MCF 10A (cell line): ENCODE measurements at regions of chr20 and their contacts with region 1.

Region 1: GRCh38 chr20:9407805-9408421 is 106.5 kb upstream of the LAMP5 start:
- DNase-seq: peak; percentile 80
- H3K4me3 Mint-ChIP-seq: no peak overlapping the region
- H3K27ac Mint-ChIP-seq: no peak overlapping the region
- H3K4me1 Mint-ChIP-seq: no peaks in the 10 kb centered on the region
- H3K27me3 Mint-ChIP-seq: no peaks in the 10 kb centered on the region
- CTCF ChIP-seq: peak; percentile 84

Region 2: DNA sequence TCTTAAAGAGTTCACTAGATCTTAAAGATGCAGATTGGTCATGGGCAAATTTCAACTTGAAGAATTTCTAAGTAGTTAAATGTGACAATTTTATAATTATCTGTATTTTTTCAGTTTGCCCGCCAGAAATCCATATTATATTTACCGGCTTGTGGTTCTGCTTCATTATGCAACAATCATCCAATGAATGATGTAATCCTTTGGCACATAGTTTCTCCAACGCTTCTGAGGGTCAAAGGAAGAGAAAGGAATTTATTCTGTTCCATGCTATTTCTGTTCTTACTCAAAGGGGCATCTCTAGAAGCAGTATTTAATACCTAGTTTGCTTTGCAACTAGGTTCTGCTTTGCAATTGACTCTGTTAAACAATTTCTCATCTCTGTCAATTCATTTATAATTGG is 698.3 kb before region 1 on chr20:
- CTCF ChIA-PET with region 1: no interaction called
- POLR2A ChIA-PET with region 1: no interaction called
- intact Hi-C with region 1: no loop called
- DNase-seq: peak; percentile 17
- H3K4me3 Mint-ChIP-seq: no peak overlapping the region
- H3K27ac Mint-ChIP-seq: no peak overlapping the region
- H3K4me1 Mint-ChIP-seq: no peaks in the 10 kb centered on the region
- H3K27me3 Mint-ChIP-seq: no peaks in the 10 kb centered on the region
- CTCF ChIP-seq: no peak

Region 3: DNA sequence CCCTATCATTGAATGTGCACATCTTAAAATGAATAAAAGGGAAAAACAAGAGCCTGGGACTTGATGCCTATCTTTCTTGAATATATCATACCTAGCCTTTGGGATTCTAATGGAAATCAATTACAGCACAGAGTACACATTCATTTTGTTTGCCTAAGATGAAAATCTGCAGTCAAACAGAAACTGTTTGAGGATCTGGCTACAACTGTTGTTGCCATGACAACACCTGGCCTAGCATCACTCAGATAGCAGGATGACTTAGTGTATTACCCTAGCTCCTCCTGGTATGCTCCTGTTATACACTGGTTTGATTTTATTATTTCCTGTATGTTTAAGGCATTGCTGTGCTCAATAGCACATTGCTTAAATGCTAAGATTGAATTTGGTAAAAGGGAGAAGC is 34.9 kb after region 1 on chr20:
- CTCF ChIA-PET with region 1: interaction called, 51 read pairs
- POLR2A ChIA-PET with region 1: no interaction called
- intact Hi-C with region 1: no loop called
- DNase-seq: no peak
- H3K4me3 Mint-ChIP-seq: no peak overlapping the region
- H3K27ac Mint-ChIP-seq: no peak overlapping the region
- H3K4me1 Mint-ChIP-seq: no peaks in the 10 kb centered on the region
- H3K27me3 Mint-ChIP-seq: no peaks in the 10 kb centered on the region
- CTCF ChIP-seq: no peak

Region 4: DNA sequence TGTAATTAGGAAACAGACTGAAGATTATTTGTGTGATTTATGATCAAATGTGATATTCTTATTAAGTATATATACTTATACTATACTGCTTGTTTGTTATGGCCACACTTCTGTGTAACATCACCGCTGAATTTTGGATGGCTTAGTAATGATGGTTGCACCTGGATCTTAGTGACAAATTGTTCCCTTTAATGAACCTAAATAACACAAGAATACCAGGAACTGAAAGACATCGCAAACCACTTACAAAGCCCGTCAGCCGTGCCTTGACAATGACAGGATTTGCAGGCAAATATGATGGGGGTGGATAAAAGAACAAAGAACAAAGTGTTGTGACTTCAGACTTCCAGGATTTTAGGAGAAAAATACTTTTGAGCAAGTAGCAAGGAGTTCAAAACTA is 173.6 kb after region 1 on chr20:
- CTCF ChIA-PET with region 1: interaction called, 21 read pairs
- POLR2A ChIA-PET with region 1: no interaction called
- intact Hi-C with region 1: no loop called
- DNase-seq: no peak
- H3K4me3 Mint-ChIP-seq: no peak overlapping the region
- H3K27ac Mint-ChIP-seq: no peak overlapping the region
- H3K4me1 Mint-ChIP-seq: no peaks in the 10 kb centered on the region
- H3K27me3 Mint-ChIP-seq: no peaks in the 10 kb centered on the region
- CTCF ChIP-seq: no peak

Region 5: DNA sequence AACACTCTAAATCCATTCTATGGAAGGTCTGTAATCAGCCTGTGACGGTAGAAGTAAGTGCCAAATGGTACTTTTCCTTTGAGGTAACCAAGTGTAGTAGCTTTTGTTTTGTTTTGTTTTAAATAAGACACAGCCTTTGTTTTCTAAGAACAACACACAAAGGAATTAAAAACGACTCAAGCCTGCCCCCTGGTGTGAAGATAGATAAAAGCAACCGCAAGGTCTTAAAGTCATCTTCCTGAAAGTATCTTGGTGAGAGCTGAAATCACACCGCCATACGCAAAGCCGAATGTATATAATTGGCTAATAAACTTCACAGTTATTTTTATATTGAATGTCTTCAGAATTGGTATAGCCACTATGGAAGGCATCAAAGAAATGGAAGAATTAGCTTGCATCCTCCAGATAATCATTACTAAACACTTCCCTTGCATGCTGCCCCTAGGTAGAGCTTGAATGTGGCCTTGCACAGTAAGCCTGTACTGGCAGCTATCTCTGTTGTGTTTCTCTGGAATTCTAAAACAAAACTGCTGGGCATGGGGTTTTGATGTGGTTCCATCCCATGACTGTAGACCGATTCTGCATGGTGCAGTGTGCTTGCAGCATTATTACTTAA is 202.1 kb after region 1 on chr20:
- CTCF ChIA-PET with region 1: interaction called, 748 read pairs
- POLR2A ChIA-PET with region 1: interaction called, 22 read pairs
- intact Hi-C with region 1: loop called (anchors 1 kb)
- DNase-seq: peak; percentile 82
- H3K4me3 Mint-ChIP-seq: no peak overlapping the region
- H3K27ac Mint-ChIP-seq: no peak overlapping the region
- H3K4me1 Mint-ChIP-seq: no peaks in the 10 kb centered on the region
- H3K27me3 Mint-ChIP-seq: peaks cover 17% of the 10 kb centered on the region
- CTCF ChIP-seq: peak; percentile 49

Region 6: GRCh38 chr20:9912858-9913434 is 505.0 kb after region 1 on chr20:
- CTCF ChIA-PET with region 1: interaction called, 30 read pairs
- POLR2A ChIA-PET with region 1: interaction called, 3 read pairs
- intact Hi-C with region 1: loop called (anchors 10 kb)
- DNase-seq: peak; percentile 56
- H3K4me3 Mint-ChIP-seq: no peak overlapping the region
- H3K27ac Mint-ChIP-seq: no peak overlapping the region
- H3K4me1 Mint-ChIP-seq: no peaks in the 10 kb centered on the region
- H3K27me3 Mint-ChIP-seq: peaks cover 18% of the 10 kb centered on the region
- CTCF ChIP-seq: peak; percentile 64